CD8-positive, alpha-beta T cell (primary cell): ENCODE measurements at regions of chr9 and their contacts with region 1.

Region 1: DNA sequence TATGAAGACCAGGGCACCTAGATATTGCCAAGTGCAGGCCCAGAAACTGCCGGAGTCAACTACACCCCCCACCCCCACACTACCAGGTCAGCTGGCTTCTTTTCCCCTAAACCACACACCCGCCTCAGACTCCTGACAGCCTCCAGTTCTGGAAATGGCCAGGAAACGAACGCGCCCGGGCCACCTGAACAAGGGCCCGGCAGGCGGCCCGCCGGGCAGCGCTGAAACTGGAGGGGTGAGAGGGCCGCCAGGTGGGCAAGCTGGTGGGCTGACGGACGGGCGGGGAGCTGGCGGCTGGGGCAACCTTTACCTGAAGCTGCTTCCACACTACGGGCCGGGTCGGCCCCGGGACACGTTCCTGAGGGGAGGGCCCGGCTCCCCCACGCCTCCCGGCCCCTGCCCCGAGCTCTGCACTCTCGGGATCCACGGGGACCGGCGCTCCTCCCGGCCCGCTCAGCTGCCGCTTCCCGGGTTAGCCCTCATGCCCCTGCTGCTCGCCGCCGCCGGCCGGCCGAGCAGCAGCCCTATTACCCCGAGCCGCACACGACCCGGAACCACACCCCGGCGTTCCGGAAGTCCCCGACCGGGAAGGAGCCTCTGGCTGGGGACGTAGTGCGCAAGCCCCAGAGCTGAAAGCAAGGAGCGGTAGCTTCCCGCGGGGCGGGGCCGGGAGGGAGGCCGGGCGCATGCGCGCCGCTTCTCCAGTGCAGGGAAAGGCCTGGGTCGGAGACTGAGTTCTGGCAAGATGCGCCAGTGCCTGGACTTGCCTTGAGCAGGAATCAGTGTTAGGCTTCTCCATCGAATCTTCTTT is at the start of gene MAPKAP1:
- DNase-seq: peak; percentile 76 to 96 (median 94)
- ATAC-seq: peak; percentile 98
- H3K4me3 ChIP-seq: peak within 1 kb of the TSS; percentile 54 to 71
- H3K4me3 Mint-ChIP-seq: peak within 1 kb of the TSS; percentile 87
- H3K27ac ChIP-seq: peak within 1 kb of the TSS; percentile 41 to 68
- H3K27ac Mint-ChIP-seq: peak within 1 kb of the TSS; percentile 88
- H3K4me1 ChIP-seq: peaks cover 17% of the 10 kb centered on the region
- H3K4me1 Mint-ChIP-seq: peaks cover 39% of the 10 kb centered on the region
- H3K27me3 ChIP-seq: peaks cover 0 to 3% of the 10 kb centered on the region in 2 experiments
- H3K27me3 Mint-ChIP-seq: peaks cover 8% of the 10 kb centered on the region
- CTCF ChIP-seq: no peak
- total RNA-seq, gene MAPKAP1: 38.2 to 42.7 TPM

Region 2: GRCh38 chr9:125652759-125653158 is 54.1 kb before region 1 on chr9:
- CTCF ChIA-PET with region 1: no interaction called
- POLR2A ChIA-PET with region 1: no interaction called
- intact Hi-C with region 1: no loop called
- DNase-seq: no peak
- ATAC-seq: no peak
- H3K4me3 ChIP-seq: no peak overlapping the region
- H3K4me3 Mint-ChIP-seq: no peak overlapping the region
- H3K27ac ChIP-seq: no peak overlapping the region
- H3K27ac Mint-ChIP-seq: peak overlapping the region; percentile 24
- H3K4me1 ChIP-seq: peaks cover 5% of the 10 kb centered on the region
- H3K4me1 Mint-ChIP-seq: peaks cover 30% of the 10 kb centered on the region
- H3K27me3 ChIP-seq: no peaks in the 10 kb centered on the region
- H3K27me3 Mint-ChIP-seq: no peaks in the 10 kb centered on the region
- CTCF ChIP-seq: no peak

Region 3: GRCh38 chr9:125663127-125663526 is 43.7 kb before region 1 on chr9:
- CTCF ChIA-PET with region 1: no interaction called
- POLR2A ChIA-PET with region 1: interaction called, 3 read pairs
- intact Hi-C with region 1: loop called in 1 of 2 experiments (anchors 5 kb)
- DNase-seq: peak in 1 of 9 experiments; percentile 16
- ATAC-seq: peak; percentile 23
- H3K4me3 ChIP-seq: no peak overlapping the region
- H3K4me3 Mint-ChIP-seq: no peak overlapping the region
- H3K27ac ChIP-seq: no peak overlapping the region
- H3K27ac Mint-ChIP-seq: peak overlapping the region; percentile 49
- H3K4me1 ChIP-seq: no peaks in the 10 kb centered on the region
- H3K4me1 Mint-ChIP-seq: peaks cover 8% of the 10 kb centered on the region
- H3K27me3 ChIP-seq: no peaks in the 10 kb centered on the region
- H3K27me3 Mint-ChIP-seq: no peaks in the 10 kb centered on the region
- CTCF ChIP-seq: no peak

Region 4: GRCh38 chr9:125746017-125746773 is 39.3 kb after region 1 on chr9:
- CTCF ChIA-PET with region 1: interaction called, 3 read pairs
- POLR2A ChIA-PET with region 1: interaction called, 8 read pairs
- intact Hi-C with region 1: loop called (anchors 1 kb)
- DNase-seq: peak; percentile 74 to 96 (median 92)
- ATAC-seq: peak; percentile 85
- H3K4me3 ChIP-seq: peak overlapping the region; percentile 74 to 91
- H3K4me3 Mint-ChIP-seq: peak overlapping the region; percentile 98
- H3K27ac ChIP-seq: peak overlapping the region; percentile 7 to 56
- H3K27ac Mint-ChIP-seq: peak overlapping the region; percentile 88
- H3K4me1 ChIP-seq: peaks cover 11% of the 10 kb centered on the region
- H3K4me1 Mint-ChIP-seq: peaks cover 29% of the 10 kb centered on the region
- H3K27me3 ChIP-seq: no peaks in the 10 kb centered on the region
- H3K27me3 Mint-ChIP-seq: no peaks in the 10 kb centered on the region
- CTCF ChIP-seq: no peak

Region 5: DNA sequence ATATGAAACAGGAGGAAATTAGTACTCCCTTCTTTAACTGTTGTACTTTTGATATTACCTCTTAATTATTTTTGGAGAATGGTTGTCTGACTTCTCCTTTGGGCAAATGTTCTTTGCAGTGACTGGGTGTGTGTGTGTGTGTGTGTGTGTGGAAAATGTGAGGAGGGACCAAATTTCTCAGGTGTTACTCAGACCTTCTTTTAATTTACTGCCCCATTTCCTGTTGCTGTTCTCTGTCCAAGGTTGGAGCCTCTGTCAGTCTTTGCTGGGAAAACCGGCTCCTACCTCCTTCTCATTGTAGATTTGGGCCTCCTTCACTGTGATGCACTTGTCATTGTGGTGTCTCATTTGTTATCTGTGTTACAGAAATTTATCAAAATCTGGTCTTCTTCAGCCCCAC is 108.7 kb after region 1 on chr9:
- CTCF ChIA-PET with region 1: no interaction called
- POLR2A ChIA-PET with region 1: no interaction called
- intact Hi-C with region 1: loop called in 1 of 2 experiments (anchors 5 kb)
- DNase-seq: no peak
- ATAC-seq: no peak
- H3K4me3 ChIP-seq: no peak overlapping the region
- H3K4me3 Mint-ChIP-seq: no peak overlapping the region
- H3K27ac ChIP-seq: no peak overlapping the region
- H3K27ac Mint-ChIP-seq: no peak overlapping the region
- H3K4me1 ChIP-seq: no peaks in the 10 kb centered on the region
- H3K4me1 Mint-ChIP-seq: peaks cover 7% of the 10 kb centered on the region
- H3K27me3 ChIP-seq: no peaks in the 10 kb centered on the region
- H3K27me3 Mint-ChIP-seq: no peaks in the 10 kb centered on the region
- CTCF ChIP-seq: no peak

Region 6: GRCh38 chr9:125829743-125830142 is 122.9 kb after region 1 on chr9:
- CTCF ChIA-PET with region 1: no interaction called
- POLR2A ChIA-PET with region 1: no interaction called
- intact Hi-C with region 1: loop called (anchors 5 kb)
- DNase-seq: peak; percentile 16 to 86 (median 60)
- ATAC-seq: peak; percentile 97
- H3K4me3 ChIP-seq: peak overlapping the region; percentile 45 to 46
- H3K4me3 Mint-ChIP-seq: peak overlapping the region; percentile 83
- H3K27ac ChIP-seq: peak overlapping the region; percentile 58 to 73
- H3K27ac Mint-ChIP-seq: peak overlapping the region; percentile 95
- H3K4me1 ChIP-seq: peaks cover 13% of the 10 kb centered on the region
- H3K4me1 Mint-ChIP-seq: peaks cover 44% of the 10 kb centered on the region
- H3K27me3 ChIP-seq: no peaks in the 10 kb centered on the region
- H3K27me3 Mint-ChIP-seq: no peaks in the 10 kb centered on the region
- CTCF ChIP-seq: no peak